GM18951 (cell line): ENCODE measurements at regions of chr3 and their contacts with region 1.

Region 1: DNA sequence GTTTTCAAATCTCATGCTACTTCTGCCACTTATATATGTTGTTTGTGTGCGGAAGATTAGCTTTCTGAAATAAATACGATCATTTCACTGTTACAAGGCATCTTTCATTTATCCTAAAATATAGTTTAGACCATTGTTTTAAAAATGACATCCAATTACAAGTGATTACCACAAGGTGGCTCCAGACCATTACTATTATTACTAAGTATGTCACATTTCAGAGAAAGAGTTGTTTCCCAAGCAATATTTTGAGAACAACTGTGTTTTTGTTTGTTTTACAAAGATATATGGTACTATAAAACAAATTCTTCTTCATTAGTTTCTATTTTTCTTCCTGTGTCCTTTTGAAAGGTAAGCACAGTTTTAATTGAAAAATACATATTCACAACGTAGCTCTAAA is 136.0 kb upstream of the RAP2B start:
- POLR2A ChIP-seq: no peak

Region 2: DNA sequence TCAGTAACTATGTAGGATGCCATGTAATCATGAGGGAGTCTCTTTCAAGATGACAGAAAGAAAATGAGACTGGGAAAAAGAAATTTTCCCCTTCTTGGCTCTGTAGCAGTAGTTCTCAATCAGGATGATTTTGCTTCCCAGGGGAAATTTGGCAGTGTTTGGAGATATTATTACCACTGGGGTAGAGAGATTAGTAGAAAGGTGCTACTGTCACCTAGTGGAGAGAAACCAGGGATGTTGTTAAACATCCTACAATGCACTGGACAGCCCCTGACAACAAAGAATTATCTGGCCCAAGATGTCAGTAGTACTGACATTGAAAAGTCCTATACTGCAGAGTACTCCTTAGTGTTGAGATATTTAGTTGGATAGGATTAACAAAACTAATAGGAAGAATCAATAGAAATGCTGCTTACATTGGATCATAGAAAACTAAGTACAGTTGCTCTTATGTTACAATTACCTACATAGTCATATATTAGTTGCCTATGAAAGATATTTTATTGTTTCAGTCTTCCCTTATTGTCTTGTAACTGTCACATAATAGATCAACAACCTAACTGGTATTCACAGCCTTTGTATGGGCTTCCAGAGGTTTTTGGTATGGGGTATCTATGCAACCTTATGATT is 569.3 kb after region 1 on chr3:
- in situ Hi-C with region 1: loop called (anchors 25 kb)
- POLR2A ChIP-seq: no peak

Region 3: DNA sequence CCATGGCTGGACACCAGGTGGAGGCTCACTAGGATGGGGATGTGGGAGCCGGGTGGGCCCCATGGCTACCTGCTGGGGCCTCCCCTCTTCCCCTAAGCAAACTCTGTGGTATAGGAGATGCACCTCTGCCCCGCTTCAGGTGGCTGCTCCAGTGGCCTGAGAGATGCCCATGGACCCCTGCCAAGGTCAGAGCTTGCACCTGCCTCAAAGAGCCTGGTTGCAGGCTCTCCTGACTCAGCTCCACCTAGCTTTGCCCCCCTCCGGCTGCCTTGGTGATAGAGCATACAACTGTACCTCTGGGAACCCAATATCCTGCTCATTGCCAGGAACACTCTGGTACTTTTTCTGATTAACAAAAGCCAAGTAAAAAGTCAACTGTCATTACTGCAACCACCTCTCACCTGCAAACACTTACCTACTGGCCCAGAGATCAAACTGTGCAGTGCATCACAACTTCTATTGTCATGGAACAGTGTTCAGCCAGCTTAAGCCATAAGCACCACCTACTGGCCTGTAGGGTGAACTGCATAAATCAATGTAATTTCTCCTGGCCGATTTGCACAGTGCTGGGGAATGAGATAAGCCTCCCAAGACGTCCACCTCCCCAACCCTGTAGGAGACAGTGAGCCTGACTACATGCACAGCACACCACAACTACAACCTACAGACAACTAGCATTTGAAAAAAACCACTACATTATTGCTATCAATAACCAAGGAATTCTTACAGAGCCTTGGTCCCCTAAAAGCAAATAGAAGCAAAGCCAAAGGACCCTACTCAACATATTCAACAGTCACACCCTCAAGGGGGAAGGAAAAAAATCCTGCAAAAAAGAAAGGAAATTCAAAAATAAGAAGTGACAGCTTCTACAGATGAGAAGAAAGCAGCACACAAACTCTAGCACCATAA is 742.8 kb after region 1 on chr3:
- in situ Hi-C with region 1: loop called (anchors 25 kb)
- POLR2A ChIP-seq: no peak

Region 4: DNA sequence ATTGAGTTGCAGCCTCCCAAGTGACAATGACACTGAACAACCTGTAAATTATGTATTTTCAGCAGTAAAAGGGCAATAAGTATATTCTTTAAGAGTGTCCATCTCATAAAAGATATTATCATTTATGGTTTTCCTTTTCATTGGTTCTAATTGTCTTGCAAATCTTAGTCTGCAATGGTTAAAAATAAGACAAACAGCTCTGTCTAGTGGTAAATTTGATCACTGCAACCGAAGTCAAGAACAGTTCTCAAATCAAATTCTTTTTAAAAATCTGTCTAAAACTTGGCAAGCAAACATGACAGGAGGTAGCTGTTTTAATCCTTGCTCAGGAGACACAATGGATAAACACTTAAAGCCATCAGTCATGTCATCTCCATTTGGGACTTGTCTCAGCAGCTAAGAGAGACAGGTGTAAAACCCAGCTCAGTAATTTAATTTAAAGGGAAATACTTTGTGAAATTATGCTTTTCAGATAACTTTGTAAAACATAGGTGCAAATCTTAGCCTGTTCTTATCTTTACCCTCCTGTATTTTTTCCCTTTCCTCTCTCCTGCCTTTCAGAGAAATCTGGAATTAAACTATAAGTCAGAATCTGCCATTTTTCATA is 944.8 kb after region 1 on chr3:
- in situ Hi-C with region 1: loop called (anchors 25 kb)
- POLR2A ChIP-seq: no peak